PC-3 (cell line): ENCODE measurements at regions of chr17 and their contacts with region 1.

Region 1: DNA sequence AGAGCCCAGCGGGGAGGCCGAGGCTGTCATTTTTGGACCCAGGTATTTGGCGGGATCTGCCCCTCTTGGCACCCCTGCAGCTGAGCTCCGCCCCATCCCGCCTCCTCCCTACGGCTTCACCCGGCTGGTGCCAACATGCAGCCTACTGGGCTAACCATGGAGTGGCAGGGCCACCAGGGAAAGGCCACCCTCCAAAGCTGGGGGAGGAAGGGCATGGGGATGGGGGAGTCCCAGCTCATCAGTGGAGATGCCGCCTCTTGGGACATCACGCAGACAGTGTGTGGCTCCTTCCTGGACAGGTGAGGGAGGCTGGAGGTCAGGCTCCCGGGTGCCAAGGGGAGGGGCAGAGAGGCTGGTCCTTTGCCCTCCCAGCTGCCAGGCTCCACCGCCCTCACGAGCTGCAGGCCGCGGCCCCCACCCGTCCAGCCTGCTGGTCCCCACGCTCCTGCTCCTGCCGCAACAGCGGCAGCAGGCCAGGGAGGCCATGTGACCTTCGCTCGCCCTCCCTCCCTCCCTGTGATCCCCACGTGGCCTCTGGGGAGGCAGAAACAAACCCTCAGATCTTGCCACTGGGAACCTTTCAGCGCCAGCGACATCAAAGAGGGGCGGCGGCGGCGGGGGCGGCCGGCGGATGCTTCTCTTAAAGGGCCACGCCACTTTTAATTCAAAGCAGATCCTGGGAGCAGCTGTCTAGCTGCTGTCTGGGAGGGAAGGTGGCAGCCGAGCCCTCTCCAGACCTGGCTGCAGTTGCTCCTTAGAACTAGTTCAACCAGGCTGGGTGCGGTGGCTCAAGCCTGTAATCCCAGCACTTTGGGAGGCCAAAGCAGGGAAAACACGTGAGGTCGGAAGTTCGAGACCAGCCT is 6.8 kb upstream of the NOTUM start:
- DNase-seq: peak; percentile 14
- ATAC-seq: peak; percentile 27; the same call in 1 of the 2 replicates
- H3K4me3 ChIP-seq: no peak overlapping the region
- H3K27ac ChIP-seq: no peak overlapping the region
- H3K4me1 ChIP-seq: no peaks in the 10 kb centered on the region
- H3K27me3 ChIP-seq: no peaks in the 10 kb centered on the region
- CTCF ChIP-seq: no peak

Region 2: GRCh38 chr17:82017612-82018151 is 49.9 kb after region 1 on chr17:
- CTCF ChIA-PET with region 1: interaction called, 13 read pairs
- POLR2A ChIA-PET with region 1: no interaction called
- intact Hi-C with region 1: no loop called
- DNase-seq: no peak
- ATAC-seq: no peak
- H3K4me3 ChIP-seq: no peak overlapping the region
- H3K27ac ChIP-seq: no peak overlapping the region
- H3K4me1 ChIP-seq: 0 out of 2 replicates have a peak, but pooled peaks cover 12% of the 10 kb centered on the region
- H3K27me3 ChIP-seq: no peaks in the 10 kb centered on the region
- CTCF ChIP-seq: no peak